Ascending aorta (tissue), 2 donors: ENCODE measurements at regions of chr16 and their contacts with region 1.

Region 1: DNA sequence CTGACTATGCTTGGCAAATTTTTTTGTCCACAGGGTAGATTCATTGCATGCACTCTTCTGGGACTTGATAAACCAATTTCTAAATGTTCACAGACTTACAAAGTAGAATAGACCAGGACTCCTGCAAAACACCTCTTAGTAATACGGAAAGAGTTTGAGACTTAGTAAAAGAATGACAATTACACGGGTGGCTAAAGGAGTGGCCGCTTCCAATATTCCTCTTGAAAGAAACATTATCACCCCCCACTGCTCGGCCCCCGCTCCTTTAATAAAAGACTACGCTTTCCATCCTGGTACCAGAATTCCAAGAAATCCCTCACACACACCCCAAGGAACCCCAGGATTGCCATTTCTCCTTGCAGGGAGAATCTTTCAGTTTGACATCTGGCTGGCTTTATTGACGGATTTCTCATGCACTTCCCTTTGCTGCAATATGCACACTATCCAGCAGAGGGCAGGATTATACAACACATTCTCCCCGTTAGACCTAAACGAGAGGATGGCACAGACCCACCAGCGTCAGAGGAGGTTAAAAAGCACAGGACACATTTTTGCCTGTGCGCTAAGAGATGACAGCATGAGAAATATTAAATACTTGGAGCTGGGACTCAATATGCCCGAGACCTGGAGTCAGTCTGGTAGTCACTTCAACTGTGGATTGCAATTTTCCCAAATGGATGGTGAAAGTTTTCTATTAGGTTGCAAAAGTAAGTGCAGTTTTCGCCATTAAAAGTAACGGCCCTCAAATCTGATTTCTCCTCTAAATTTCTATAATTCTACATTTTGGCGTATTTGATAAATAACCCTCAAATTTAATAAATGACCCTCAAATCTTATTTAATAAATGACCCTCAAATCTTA is 46.6 kb upstream of the NUDT7 start:
- DNase-seq: peak in 1 of 2 donors; percentile 88
- H3K4me3 ChIP-seq: no peak overlapping the region
- H3K27ac ChIP-seq: no peak overlapping the region
- H3K4me1 ChIP-seq: no peaks in the 10 kb centered on the region
- H3K27me3 ChIP-seq: no peaks in the 10 kb centered on the region
- CTCF ChIP-seq: peak; percentile 90 to 95 (median 91)

Region 2: GRCh38 chr16:77711775-77712174 is 36.1 kb after region 1 on chr16:
- intact Hi-C with region 1: no loop called
- DNase-seq: no peak
- H3K4me3 ChIP-seq: no peak overlapping the region
- H3K27ac ChIP-seq: no peak overlapping the region
- H3K4me1 ChIP-seq: no peaks in the 10 kb centered on the region
- H3K27me3 ChIP-seq: no peaks in the 10 kb centered on the region
- CTCF ChIP-seq: no peak

Region 3: DNA sequence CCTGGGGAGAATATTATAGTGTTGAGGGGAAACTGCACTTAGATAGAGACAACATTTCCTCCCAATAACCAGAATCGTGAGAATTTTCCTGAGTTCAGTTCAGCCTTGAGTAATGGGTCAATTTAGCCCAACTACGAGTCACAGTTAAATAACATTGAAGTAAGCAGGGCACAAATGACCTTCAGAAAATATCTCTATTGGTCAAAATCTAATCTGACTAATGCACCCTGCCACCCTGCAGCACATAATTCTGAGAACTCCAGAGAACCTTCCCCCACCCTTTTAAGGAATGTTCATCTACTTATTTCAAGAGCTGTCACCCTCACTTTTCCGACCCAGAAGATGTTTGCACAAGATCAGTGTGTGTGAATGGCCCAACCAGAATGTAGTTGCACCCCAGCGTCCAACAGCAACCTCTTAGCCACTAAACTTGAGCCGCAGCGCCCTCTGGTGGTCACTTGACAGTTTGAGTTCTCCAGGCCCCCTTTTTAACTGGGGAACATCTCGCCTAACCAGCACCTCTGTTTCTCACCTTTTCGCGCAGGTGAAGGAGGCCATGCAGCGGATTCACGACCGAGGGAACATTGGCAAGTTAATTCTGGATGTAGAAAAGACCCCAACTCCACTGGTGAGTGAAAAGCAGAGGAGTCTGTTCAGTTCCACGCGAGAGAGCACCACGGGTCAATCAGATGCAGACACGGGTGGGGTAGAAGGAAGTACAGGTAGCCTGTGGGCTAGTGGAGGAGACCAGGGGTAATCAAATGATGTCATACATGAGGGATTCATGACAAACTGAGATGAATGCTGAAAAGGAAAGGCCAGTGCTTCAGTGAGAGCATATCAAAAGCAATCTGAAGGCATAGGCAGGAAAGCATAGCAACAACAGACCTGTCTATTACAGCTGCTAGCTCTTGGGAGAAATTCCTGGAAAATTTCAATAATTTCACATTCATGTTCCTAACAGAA is 295.9 kb after region 1 on chr16:
- intact Hi-C with region 1: loop called (anchors 1 kb)
- DNase-seq: peak in 1 of 2 donors; percentile 91
- H3K4me3 ChIP-seq: no peak overlapping the region
- H3K27ac ChIP-seq: peak overlapping the region; percentile 50 to 59
- H3K4me1 ChIP-seq: peaks cover 0 to 5% of the 10 kb centered on the region in 2 donors
- H3K27me3 ChIP-seq: no peaks in the 10 kb centered on the region
- CTCF ChIP-seq: peak; percentile 68 to 89 (median 84)

Region 4: GRCh38 chr16:78002915-78003538 is 327.3 kb after region 1 on chr16:
- intact Hi-C with region 1: loop called (anchors 1 kb)
- DNase-seq: peak; percentile 32 to 94
- H3K4me3 ChIP-seq: no peak overlapping the region
- H3K27ac ChIP-seq: no peak overlapping the region
- H3K4me1 ChIP-seq: no peaks in the 10 kb centered on the region
- H3K27me3 ChIP-seq: no peaks in the 10 kb centered on the region
- CTCF ChIP-seq: peak; percentile 87 to 90 (median 88)

Region 5: DNA sequence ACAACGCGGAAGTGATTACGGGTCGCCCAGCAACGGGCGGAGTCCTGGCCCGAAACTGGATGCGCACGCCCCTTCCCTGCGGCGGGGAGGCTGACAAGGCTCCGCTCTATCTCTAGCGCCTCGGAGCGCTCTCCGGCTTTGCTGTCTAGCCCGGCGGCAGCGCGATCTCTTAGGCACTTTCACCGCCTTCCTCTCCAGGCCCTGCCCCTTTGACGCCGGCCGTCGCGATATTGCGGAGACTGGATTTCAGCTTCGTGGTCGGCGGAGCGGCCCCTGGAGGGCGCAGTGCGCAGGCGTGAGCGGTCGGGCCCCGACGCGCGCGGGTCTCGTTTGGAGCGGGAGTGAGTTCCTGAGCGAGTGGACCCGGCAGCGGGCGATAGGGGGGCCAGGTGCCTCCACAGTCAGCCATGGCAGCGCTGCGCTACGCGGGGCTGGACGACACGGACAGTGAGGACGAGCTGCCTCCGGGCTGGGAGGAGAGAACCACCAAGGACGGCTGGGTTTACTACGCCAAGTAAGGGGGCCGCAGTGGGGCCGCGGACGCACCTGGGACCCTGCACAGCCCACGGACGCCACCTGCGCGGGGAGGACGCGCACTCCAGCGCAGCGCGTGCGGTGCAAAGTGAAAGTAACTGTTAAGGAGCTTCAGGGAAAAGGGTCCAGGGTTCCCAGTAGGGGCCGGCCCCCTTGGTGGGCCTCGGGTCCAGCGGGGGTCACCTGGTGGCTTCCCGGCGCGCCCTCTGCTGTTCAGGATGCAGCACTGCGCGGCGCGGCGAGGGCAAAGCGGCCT is 423.9 kb after region 1 on chr16 and contains the start of gene WWOX:
- intact Hi-C with region 1: loop called (anchors 2 kb)
- DNase-seq: peak; percentile 91 to 99
- H3K4me3 ChIP-seq: peak within 1 kb of the TSS; percentile 67 to 98
- H3K27ac ChIP-seq: peak within 1 kb of the TSS; percentile 88 to 92
- H3K4me1 ChIP-seq: peaks cover 4 to 15% of the 10 kb centered on the region in 2 donors
- H3K27me3 ChIP-seq: no peaks in the 10 kb centered on the region
- CTCF ChIP-seq: peak; percentile 76 to 94 (median 81)
- total RNA-seq, gene WWOX: 106 TPM